HepG2 (cell line): ENCODE measurements at regions of chr9 and their contacts with region 1.

Region 1: DNA sequence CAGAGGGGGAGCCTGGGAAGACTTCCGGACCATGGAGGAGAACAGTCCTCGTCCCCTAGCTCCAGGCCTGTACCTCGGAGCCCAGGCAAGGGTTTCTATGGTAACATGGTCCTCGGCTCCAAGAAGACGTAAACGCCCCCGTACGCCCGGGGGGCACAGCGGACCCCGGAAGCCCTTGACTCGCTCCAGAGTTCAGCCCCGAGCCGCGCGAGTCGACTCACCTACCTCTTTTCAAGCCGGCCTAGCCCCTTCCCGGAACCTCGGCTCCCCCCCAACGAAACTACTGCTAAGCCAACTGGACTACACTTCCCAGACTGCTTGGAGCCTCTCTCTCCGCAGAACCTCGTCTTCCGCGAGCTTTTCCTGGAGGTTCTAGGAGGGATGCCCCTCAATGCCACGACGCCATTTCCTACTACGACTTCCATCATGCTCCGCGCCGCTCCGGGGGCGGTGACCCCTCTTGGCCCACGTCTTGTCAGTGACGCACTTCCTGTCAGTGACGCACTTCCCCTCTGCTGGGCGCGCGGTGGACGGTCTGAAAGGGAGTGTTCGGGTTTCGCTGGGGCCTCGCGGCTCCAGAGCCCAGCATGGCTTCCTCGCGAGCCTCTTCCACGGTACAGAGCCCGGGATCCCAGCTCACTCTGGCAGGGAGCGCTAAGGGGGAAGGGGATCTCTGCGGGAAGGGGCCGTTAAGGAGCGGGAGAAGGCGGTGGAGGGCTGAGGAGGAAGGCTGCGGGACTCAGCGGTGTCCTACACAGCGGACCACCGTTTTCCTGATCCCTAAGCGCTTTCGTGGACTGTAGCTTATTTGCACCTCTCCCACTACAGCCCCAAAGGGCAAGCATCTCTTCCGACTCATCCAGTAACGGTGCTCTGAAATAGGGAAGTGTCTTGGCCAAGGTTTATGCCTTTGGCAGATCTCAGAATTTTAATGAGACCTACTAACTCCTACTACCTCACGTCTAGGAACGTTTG is at the starts of genes CDC26 and PRPF4:
- DNase-seq: peak; percentile 97
- ATAC-seq: peak; percentile 95
- H3K4me3 ChIP-seq: peak within 1 kb of the TSS; percentile 75 to 98 (median 82)
- H3K27ac ChIP-seq: peak within 1 kb of the TSS; percentile 85
- H3K4me1 ChIP-seq: peaks cover 42% of the 10 kb centered on the region
- H3K27me3 ChIP-seq: no peaks in the 10 kb centered on the region; a peak in 2 of 5 replicates
- CTCF ChIP-seq: peak; percentile 23; the same call in 1 of the 2 replicates
- EP300 ChIP-seq: peak in 1 of 2 experiments; percentile 16; a peak in 1 of 4 replicates
- POLR2A ChIP-seq: peak; percentile 91 to 97
- RAD21 ChIP-seq: 0 out of 2 replicates have a peak, but pooled peaks have one; percentile 31
- total RNA-seq, gene CDC26: 57.9 and 66.0 TPM in 2 replicates
- total RNA-seq, gene PRPF4: 49.0 and 64.9 TPM in 2 replicates

Region 2: GRCh38 chr9:113221003-113221799 is 54.2 kb before region 1 on chr9 and contains the starts of genes FKBP15 and SLC31A1:
- CTCF ChIA-PET with region 1: no interaction called
- POLR2A ChIA-PET with region 1: interaction called, 40 read pairs
- in situ Hi-C with region 1: no loop called
- intact Hi-C with region 1: loop called (anchors 2 kb)
- DNase-seq: peak; percentile 95
- ATAC-seq: peak; percentile 90
- H3K4me3 ChIP-seq: peak within 1 kb of the TSS; percentile 90 to 92 (median 91)
- H3K27ac ChIP-seq: peak within 1 kb of the TSS; percentile 86
- H3K4me1 ChIP-seq: peaks cover 53% of the 10 kb centered on the region
- H3K27me3 ChIP-seq: peaks cover 0 to 3% of the 10 kb centered on the region in 2 experiments; a peak in 1 of 5 replicates
- CTCF ChIP-seq: no peak
- EP300 ChIP-seq: peak in 1 of 2 experiments; percentile 32; a peak in 1 of 4 replicates
- POLR2A ChIP-seq: peak; percentile 91 to 93
- RAD21 ChIP-seq: no peak
- total RNA-seq, gene FKBP15: 11.8 and 12.3 TPM in 2 replicates
- total RNA-seq, gene SLC31A1: 45.9 and 70.0 TPM in 2 replicates

Region 3: DNA sequence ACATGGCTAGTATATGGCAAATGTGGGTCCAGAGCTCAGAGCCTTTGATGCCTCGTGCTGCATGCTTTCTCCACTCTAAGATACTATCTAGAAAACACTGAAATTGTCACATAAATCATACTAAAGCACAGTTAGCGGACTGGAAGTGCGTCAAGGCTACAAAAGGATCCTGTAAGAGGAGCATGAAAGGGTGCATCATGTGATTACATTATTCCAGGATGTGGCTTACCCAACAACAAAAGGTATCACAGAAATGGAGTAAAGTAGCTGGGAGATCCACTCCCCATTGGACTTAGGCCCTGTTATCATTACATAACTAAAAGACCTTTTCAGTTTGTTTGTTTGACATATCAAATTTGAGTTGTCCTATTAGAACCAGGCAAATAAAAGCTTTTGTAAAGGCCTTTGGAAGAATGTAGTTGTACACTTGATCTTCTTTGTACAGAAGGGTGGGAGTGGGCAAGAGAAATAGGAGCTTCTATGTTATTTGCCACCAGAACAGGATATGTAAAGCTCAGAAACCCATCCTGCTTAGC is 47.2 kb before region 1 on chr9:
- CTCF ChIA-PET with region 1: no interaction called
- POLR2A ChIA-PET with region 1: interaction called, 40 read pairs
- in situ Hi-C with region 1: no loop called
- intact Hi-C with region 1: no loop called
- DNase-seq: peak; percentile 94
- ATAC-seq: peak; percentile 91
- H3K4me3 ChIP-seq: no peak overlapping the region
- H3K27ac ChIP-seq: peak overlapping the region; percentile 73
- H3K4me1 ChIP-seq: peaks cover 85% of the 10 kb centered on the region
- H3K27me3 ChIP-seq: no peaks in the 10 kb centered on the region
- CTCF ChIP-seq: no peak
- EP300 ChIP-seq: peak in 1 of 2 experiments; percentile 57; a peak in 1 of 4 replicates
- POLR2A ChIP-seq: no peak
- RAD21 ChIP-seq: no peak

Region 4: GRCh38 chr9:113261917-113262671 is 13.3 kb before region 1 on chr9:
- CTCF ChIA-PET with region 1: no interaction called
- POLR2A ChIA-PET with region 1: interaction called, 15 read pairs
- in situ Hi-C with region 1: no loop called
- intact Hi-C with region 1: no loop called
- DNase-seq: peak; percentile 35
- ATAC-seq: peak; percentile 77
- H3K4me3 ChIP-seq: no peak overlapping the region
- H3K27ac ChIP-seq: peak overlapping the region; percentile 65
- H3K4me1 ChIP-seq: peaks cover 18% of the 10 kb centered on the region
- H3K27me3 ChIP-seq: no peaks in the 10 kb centered on the region
- CTCF ChIP-seq: no peak
- EP300 ChIP-seq: 0 out of 4 replicates have a peak, but pooled peaks of 1 of the 2 experiments have one; percentile 4
- POLR2A ChIP-seq: no peak
- RAD21 ChIP-seq: no peak

Region 5: DNA sequence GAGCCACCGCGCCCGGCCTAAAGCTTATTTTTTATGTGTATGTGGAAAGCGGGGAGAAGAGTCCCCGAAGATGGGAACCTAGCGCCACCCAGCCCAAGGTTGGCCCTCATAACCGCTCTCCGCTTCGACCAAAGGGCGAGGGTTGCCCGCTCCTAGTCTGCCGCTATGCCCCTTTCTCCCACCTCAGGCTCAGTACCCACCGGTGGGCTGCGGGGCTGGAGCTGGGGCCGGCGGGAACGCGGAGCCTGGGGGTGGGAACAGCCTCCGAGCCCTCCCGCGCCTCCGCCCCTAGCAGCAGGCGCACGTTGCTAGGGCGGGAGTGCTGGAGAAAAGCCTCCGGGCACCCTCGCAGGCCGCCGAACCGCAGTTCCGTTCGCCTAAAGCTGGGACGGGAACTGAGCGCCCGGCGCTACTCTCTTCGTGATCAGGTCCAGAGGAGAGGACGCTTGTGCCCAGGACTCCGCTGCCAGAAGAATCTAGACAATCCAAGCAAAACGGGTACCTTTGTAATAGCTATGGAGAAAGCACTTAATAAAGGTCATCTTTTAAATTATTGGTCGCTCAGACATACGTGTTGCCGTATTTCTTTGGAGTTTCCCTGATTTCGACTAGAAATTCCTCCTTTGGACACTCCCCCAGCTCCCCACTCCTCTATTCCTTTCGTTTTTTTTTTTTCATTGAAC is 64.7 kb after region 1 on chr9 and contains the start of gene WDR31:
- CTCF ChIA-PET with region 1: no interaction called
- POLR2A ChIA-PET with region 1: interaction called, 20 read pairs
- in situ Hi-C with region 1: no loop called
- intact Hi-C with region 1: loop called (anchors 1 kb)
- DNase-seq: peak; percentile 73
- ATAC-seq: peak; percentile 96
- H3K4me3 ChIP-seq: peak within 1 kb of the TSS; percentile 65 to 79 (median 65)
- H3K27ac ChIP-seq: peak within 1 kb of the TSS; percentile 53
- H3K4me1 ChIP-seq: peaks cover 28% of the 10 kb centered on the region
- H3K27me3 ChIP-seq: no peaks in the 10 kb centered on the region
- CTCF ChIP-seq: peak; percentile 43; the same call in 1 of the 2 replicates
- EP300 ChIP-seq: peak in 1 of 2 experiments; percentile 56; a peak in 1 of 4 replicates
- POLR2A ChIP-seq: peak; percentile 52 to 84; a peak in 3 of 4 replicates
- RAD21 ChIP-seq: peak; percentile 58
- total RNA-seq, gene WDR31: 0.33 and 0.56 TPM in 2 replicates

Region 6: GRCh38 chr9:113401027-113401792 is 125.8 kb after region 1 on chr9 and contains the start of gene ALAD:
- CTCF ChIA-PET with region 1: no interaction called
- POLR2A ChIA-PET with region 1: interaction called, 7 read pairs
- in situ Hi-C with region 1: no loop called
- intact Hi-C with region 1: loop called (anchors 10 kb)
- DNase-seq: peak; percentile 95
- ATAC-seq: peak; percentile 98
- H3K4me3 ChIP-seq: peak within 1 kb of the TSS; percentile 73 to 91 (median 86)
- H3K27ac ChIP-seq: peak within 1 kb of the TSS; percentile 44
- H3K4me1 ChIP-seq: peaks cover 49% of the 10 kb centered on the region
- H3K27me3 ChIP-seq: no peaks in the 10 kb centered on the region; a peak in 1 of 5 replicates
- CTCF ChIP-seq: peak; percentile 99
- EP300 ChIP-seq: peak in 1 of 2 experiments; percentile 36; a peak in 1 of 4 replicates
- POLR2A ChIP-seq: peak in 1 of 2 experiments; percentile 77; a peak in 2 of 4 replicates
- RAD21 ChIP-seq: peak; percentile 96
- total RNA-seq, gene ALAD: 21.8 and 23.0 TPM in 2 replicates

Region 7: GRCh38 chr9:113657703-113658544 is 382.5 kb after region 1 on chr9:
- CTCF ChIA-PET with region 1: no interaction called
- POLR2A ChIA-PET with region 1: no interaction called
- in situ Hi-C with region 1: loop called (anchors 5 kb)
- intact Hi-C with region 1: loop called (anchors 10 kb)
- DNase-seq: peak; percentile 73
- ATAC-seq: peak; percentile 92
- H3K4me3 ChIP-seq: no peak overlapping the region
- H3K27ac ChIP-seq: no peak overlapping the region
- H3K4me1 ChIP-seq: peaks cover 65% of the 10 kb centered on the region
- H3K27me3 ChIP-seq: peaks cover 0 to 19% of the 10 kb centered on the region in 2 experiments; a peak in 2 of 5 replicates
- CTCF ChIP-seq: peak; percentile 99
- EP300 ChIP-seq: no peak
- POLR2A ChIP-seq: no peak
- RAD21 ChIP-seq: peak; percentile 99